Psoas muscle (tissue), 8 donors: ENCODE measurements at regions of chr6 and their contacts with region 1.

Region 1: GRCh38 chr6:107584726-107585125 is 94.8 kb downstream of the SOBP start:
- DNase-seq: no peak
- ATAC-seq: no peak
- H3K4me3 ChIP-seq: no peak overlapping the region
- H3K27ac ChIP-seq: no peak overlapping the region
- H3K4me1 ChIP-seq: peaks cover 17% of the 10 kb centered on the region
- H3K27me3 ChIP-seq: no peaks in the 10 kb centered on the region
- CTCF ChIP-seq: no peak

Region 2: GRCh38 chr6:107539409-107539808 is 45.3 kb before region 1 on chr6:
- intact Hi-C with region 1: no loop called
- DNase-seq: no peak
- ATAC-seq: peak; percentile 66 to 85 (median 75)
- H3K4me3 ChIP-seq: peak overlapping the region; percentile 28
- H3K27ac ChIP-seq: peak overlapping the region; percentile 53
- H3K4me1 ChIP-seq: peaks cover 59% of the 10 kb centered on the region
- H3K27me3 ChIP-seq: no peaks in the 10 kb centered on the region
- CTCF ChIP-seq: no peak

Region 3: DNA sequence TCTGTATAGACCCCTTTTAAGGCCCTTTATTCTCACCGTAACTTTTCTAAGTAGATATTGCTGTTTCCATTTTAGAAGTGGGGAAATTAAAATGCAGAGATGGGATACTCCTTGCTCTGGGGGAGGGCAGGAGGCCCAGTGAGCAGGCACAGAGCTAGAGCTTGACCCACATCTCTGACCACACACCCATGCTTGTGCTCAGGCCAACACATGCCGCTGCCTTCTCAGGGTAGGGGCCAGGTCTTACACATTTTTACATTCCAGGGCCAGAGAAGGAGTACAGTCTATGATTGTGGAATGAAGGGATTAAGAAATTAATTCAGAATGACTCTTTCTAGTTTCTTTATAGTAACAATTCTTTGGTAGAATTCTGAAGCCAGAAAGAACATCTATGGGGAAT is 10.0 kb after region 1 on chr6:
- intact Hi-C with region 1: loop called in 1 of 2 experiments (anchors 1 kb)
- DNase-seq: peak in 1 of 2 donors; percentile 40
- ATAC-seq: peak; percentile 85 to 94 (median 90)
- H3K4me3 ChIP-seq: no peak overlapping the region
- H3K27ac ChIP-seq: peak overlapping the region; percentile 46
- H3K4me1 ChIP-seq: peaks cover 32% of the 10 kb centered on the region
- H3K27me3 ChIP-seq: no peaks in the 10 kb centered on the region
- CTCF ChIP-seq: no peak